ENCODE measurements at regions of chr16 and their contacts with region 1.

Region 1: DNA sequence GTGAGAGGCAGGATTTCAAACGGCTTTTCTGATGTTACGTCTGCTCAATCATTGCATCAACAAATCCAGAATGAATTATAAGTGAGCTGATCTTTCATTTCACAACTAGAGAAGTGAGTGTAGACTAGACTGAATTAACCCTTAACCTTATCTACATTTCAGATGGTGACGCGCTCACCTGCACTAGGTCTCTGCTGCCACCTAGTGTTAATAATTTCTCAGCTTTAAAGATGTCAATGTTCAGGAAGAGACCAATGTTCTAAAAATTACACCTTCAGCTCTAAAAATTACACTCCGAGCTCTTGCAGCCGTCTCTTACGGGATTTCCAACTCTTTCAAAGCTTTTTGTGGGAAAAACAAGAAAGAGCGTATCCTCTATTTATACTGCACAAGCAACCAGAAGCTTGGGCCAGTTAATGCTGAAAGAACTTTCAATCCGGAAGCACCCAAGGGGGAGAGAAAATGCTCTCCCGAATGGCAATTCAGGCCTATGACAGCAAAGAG is 88.2 kb upstream of the FA2H start:
- DNase-seq: peak; percentile 82
- CTCF ChIP-seq: peak; percentile 55

Region 2: DNA sequence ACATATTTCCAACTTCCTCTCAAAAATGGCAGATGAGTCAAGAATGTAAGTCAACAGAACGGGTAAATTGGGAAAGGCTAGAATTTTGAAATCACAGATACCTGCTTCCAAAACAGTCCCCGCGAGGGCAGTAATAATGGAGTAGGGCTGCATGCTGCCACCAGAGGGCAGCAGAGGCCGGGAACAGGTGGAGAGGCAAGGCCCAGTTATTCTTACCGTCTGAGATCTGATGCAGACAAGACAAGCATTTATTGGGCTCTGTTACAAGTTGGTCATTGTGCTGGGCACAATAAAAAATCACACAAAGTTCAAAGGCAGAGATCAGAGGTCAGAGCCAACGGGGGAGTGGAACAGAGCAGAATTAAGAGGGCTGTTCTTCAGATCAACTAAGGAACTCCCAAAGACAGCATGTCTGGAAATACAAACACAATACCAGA is 153.3 kb before region 1 on chr16:
- in situ Hi-C with region 1: loop called (anchors 25 kb)
- DNase-seq: peak; percentile 86
- CTCF ChIP-seq: peak; percentile 92

Region 3: DNA sequence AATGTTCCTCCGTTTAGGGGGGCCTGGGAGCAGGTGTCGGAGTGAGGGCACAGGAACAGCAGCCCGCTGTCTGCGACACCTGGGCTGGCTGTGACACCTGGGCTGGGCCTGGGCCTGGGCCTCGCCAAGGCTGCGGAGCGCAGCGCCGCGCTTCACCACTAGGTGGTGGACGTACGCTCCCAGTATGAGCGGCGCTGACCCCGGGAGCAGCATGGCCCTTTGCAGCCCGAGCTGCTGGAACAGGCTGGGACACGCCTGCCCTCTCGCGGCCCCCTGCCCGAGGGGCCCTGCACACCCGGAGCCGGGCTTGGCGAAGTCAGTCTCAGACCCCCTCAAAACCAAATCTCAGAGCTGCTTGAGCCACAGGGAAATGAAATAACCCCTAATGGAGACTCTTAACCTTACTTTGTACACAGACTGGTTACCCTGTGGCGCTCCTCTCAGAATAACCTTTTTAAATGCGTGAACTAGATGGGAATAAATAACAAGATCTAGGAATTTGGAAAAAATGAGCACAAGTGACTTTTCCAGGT is 49.6 kb before region 1 on chr16:
- in situ Hi-C with region 1: loop called (anchors 10 kb)
- DNase-seq: peak; percentile 91
- CTCF ChIP-seq: peak; percentile 93

Region 4: GRCh38 chr16:75224306-75225091 is 361.7 kb after region 1 on chr16:
- in situ Hi-C with region 1: no loop called
- DNase-seq: no peak
- CTCF ChIP-seq: no peak